Posterior vena cava (tissue), 2 donors: ENCODE measurements at regions of chr6 and their contacts with region 1.

Region 1: DNA sequence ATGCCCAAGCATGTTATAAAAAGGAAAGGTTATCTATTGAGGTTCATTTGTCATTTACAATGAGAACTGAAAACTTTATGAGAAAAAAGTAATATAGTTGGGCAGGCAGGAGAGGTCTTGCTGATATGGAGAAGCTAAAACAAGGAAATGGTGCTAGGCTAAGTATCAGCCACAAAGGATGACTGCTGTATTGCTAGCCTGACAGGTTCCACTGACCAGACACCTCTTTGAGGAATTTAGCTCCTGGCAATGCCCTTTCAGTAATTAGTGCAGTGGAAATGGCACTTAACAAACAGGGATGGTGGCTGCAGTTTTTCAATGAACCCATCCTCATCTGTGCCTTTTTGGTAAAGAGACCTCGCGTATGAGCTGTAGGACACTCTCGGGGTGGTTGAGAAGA is 284.4 kb downstream of the ZFAND3 start:
- DNase-seq: no peak

Region 2: DNA sequence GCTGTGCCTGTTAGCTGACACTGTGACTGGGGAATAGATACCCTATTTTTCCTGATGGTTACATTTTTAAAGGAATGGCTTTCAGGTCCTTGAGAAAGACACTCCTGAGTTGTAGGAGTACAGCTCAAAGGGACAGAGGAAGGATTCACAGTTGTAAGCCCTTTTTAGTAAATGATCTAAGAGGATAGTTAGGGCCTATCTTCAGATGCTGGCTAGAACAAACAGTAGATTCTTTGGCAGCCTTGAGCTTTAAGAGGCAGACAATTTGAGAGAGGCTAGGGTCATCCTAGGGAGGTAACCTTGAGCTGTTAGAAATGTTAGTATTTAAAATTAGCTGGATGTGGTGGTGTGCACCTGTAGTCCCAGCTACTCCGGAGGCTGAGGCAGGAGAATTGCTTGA is 172.9 kb before region 1 on chr6:
- intact Hi-C with region 1: no loop called
- DNase-seq: no peak

Region 3: GRCh38 chr6:38134704-38135088 is 30.8 kb after region 1 on chr6:
- intact Hi-C with region 1: loop called in 1 of 2 experiments (anchors 2 kb)
- DNase-seq: no peak